ENCODE measurements at regions of chr14 and their contacts with region 1.

Region 1: GRCh38 chr14:39322807-39323206 is 89.1 kb downstream of the MIA2 start:
- DNase-seq: no peak
- H3K4me3 ChIP-seq: no peak overlapping the region
- H3K27ac ChIP-seq: no peak overlapping the region
- H3K27me3 ChIP-seq: no peaks in the 10 kb centered on the region
- CTCF ChIP-seq: no peak

Region 2: GRCh38 chr14:39154594-39155189 is 168.1 kb before region 1 on chr14:
- CTCF ChIA-PET with region 1: interaction called, 11 read pairs
- POLR2A ChIA-PET with region 1: no interaction called
- DNase-seq: no peak
- H3K4me3 ChIP-seq: no peak overlapping the region
- H3K27ac ChIP-seq: no peak overlapping the region
- H3K27me3 ChIP-seq: no peaks in the 10 kb centered on the region
- CTCF ChIP-seq: no peak